Activated naive CD4-positive, alpha-beta T cell treated with anti-CD3 and anti-CD28 coated beads for 36 hours (primary cell): ENCODE measurements at regions of chr10 and their contacts with region 1.

Region 1: DNA sequence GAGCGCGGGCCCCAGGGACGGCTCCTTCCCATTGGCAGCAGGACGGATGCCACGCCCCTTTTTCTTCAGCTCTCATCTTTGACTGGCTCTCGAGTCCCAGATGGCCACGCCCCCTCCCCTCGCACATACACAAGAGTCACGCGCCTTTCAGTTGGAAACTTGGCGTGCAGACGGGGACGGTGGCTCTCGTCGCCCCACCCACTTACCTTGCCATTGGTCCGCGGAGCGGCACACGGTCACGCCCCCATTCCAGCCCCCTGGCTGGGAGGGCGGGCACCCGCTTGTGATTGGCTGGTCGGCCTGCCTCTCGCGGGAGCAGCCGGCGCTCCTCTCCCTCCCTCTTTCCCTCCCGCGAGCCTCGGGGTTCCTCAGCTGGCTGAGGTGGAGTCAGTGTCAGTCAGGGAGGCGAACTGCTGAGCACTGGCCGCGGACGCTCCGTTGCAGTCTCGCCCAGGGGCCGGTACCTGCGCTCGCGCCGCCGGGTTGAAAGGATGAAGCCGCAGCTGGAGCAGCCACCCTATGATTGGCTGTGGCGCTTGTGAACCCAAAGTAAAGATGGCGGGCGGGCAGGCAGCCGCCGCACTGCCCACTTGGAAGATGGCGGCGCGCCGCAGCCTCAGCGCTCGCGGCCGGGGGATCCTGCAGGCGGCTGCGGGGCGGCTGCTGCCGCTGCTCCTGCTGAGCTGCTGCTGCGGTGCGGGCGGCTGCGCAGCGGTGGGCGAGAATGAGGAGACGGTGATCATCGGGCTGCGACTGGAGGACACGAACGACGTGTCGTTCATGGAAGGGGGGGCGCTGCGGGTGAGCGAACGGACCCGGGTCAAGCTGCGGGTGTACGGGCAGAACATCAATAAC is at the start of gene CNNM2:
- DNase-seq: peak; percentile 100
- H3K4me3 Mint-ChIP-seq: peak within 1 kb of the TSS; percentile 92
- H3K27ac Mint-ChIP-seq: peak within 1 kb of the TSS; percentile 88
- H3K4me1 Mint-ChIP-seq: peaks cover 49% of the 10 kb centered on the region
- H3K27me3 Mint-ChIP-seq: peaks cover 5% of the 10 kb centered on the region
- total RNA-seq, gene CNNM2: 3.9 to 4.3 TPM

Region 2: DNA sequence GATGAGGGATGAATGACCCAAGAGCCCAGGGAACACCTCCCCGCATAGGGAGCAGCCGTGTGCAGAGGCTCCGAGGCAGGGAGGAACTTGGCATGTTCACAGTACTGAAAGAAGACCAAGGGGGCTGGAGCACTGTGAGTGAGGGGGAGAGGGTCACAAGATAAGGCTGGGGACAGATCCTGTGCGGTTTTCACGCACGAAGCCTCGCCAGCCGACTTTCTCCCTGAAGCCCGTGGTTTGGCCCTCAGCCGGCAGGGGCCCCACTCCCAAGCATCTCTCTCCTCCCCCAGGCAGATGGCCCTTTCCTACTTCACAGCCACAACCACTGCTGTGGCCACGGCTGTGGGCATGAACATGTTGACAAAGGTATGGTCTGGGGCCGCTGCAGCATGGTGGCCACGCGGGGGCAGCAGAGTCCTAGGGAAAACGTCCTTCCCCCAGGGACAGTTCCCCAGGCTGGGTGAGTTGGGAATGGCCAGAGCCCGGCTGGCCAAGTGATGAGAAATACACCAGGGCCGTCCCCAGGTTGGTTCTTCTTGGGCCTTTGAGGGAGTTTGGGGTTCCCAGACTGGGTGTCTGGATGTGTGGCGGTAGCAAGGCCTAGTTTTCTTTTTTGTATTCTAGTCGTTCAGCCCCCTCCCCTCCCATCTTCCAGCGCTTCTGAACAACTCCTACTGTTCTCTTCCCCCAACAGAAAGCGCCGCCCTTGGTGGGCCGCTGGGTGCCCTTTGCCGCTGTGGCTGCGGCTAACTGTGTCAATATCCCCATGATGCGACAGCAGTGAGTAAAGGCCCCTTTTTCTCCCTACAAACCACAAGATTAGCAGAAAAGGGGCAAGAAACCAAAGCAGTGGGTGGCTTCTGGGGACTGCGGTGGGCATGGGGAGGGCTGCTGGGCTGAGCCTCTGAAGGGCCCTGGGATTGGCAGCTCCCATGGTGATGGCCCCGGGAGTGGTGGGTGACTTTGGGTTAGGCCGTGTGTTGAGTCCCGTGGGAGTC is 188.9 kb before region 1 on chr10:
- CTCF ChIA-PET with region 1: no interaction called
- intact Hi-C with region 1: loop called (anchors 5 kb)
- DNase-seq: peak; percentile 71
- H3K4me3 Mint-ChIP-seq: no peak overlapping the region
- H3K27ac Mint-ChIP-seq: no peak overlapping the region
- H3K4me1 Mint-ChIP-seq: no peaks in the 10 kb centered on the region
- H3K27me3 Mint-ChIP-seq: no peaks in the 10 kb centered on the region

Region 3: DNA sequence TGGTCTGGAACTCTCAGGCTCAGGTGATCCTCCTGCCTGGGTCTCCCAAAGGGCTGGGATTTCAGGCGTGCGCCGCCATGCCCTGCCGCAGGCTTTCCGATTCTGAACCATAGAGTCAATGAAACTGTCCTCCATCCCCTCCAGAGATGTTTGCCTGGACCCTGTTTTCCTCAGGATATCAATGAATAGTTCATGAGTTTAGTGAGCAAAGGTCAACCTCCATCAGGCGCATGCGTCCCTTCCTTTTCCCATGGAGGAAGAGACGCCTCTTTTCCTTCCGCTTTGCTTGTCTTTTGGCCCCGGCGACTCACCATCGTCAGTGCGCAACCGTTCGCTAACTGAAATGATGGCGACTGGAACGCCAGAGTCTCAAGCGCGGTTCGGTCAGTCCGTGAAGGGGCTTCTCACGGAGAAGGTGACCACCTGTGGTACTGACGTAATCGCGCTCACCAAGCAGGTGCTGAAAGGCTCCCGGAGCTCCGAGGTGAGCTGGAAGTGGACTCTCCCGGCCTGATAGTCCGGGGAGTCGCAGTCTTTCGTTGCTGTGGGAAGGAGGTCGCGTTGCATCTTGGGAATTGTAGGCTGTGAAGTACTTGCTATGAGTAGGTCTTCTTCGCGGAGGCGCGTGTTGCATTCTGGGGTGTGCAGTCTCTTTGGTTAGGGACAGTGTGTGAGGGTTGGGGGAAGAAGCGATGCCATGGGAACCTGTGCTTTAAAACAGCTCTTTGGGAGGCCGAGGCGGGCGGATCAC is 64.1 kb before region 1 on chr10 and contains the start of gene BORCS7:
- CTCF ChIA-PET with region 1: interaction called, 5 read pairs
- intact Hi-C with region 1: loop called (anchors 1 kb)
- DNase-seq: peak; percentile 95
- H3K4me3 Mint-ChIP-seq: peak within 1 kb of the TSS; percentile 95
- H3K27ac Mint-ChIP-seq: peak within 1 kb of the TSS; percentile 97
- H3K4me1 Mint-ChIP-seq: peaks cover 17% of the 10 kb centered on the region
- H3K27me3 Mint-ChIP-seq: no peaks in the 10 kb centered on the region
- total RNA-seq, gene BORCS7: 5.6 to 5.8 TPM

Region 4: DNA sequence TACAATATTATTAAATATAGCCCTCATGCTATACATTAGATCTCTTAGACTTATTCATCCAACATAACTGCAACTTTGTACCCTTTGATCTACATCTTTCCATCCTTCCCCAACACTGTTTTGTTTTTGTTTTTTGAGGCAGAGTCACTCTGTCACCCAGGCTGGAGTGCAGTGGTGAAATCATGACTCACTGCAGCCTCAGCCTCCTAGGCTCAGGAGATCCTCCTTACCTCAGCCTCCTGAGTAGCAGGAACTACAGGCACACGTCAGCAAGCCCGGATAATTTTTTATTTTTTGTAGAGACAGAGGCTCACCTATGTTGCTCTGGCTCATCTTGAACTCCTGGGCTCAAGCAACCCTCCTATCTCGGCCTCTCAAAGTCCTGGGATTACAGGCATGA is 221.6 kb after region 1 on chr10:
- CTCF ChIA-PET with region 1: no interaction called
- intact Hi-C with region 1: loop called (anchors 1 kb)
- DNase-seq: peak; percentile 10
- H3K4me3 Mint-ChIP-seq: no peak overlapping the region
- H3K27ac Mint-ChIP-seq: no peak overlapping the region
- H3K4me1 Mint-ChIP-seq: peaks cover 23% of the 10 kb centered on the region
- H3K27me3 Mint-ChIP-seq: no peaks in the 10 kb centered on the region

Region 5: GRCh38 chr10:103333925-103334520 is 415.8 kb after region 1 on chr10:
- CTCF ChIA-PET with region 1: no interaction called
- intact Hi-C with region 1: loop called (anchors 1 kb)
- DNase-seq: no peak
- H3K4me3 Mint-ChIP-seq: no peak overlapping the region
- H3K27ac Mint-ChIP-seq: no peak overlapping the region
- H3K4me1 Mint-ChIP-seq: no peaks in the 10 kb centered on the region
- H3K27me3 Mint-ChIP-seq: no peaks in the 10 kb centered on the region

Region 6: DNA sequence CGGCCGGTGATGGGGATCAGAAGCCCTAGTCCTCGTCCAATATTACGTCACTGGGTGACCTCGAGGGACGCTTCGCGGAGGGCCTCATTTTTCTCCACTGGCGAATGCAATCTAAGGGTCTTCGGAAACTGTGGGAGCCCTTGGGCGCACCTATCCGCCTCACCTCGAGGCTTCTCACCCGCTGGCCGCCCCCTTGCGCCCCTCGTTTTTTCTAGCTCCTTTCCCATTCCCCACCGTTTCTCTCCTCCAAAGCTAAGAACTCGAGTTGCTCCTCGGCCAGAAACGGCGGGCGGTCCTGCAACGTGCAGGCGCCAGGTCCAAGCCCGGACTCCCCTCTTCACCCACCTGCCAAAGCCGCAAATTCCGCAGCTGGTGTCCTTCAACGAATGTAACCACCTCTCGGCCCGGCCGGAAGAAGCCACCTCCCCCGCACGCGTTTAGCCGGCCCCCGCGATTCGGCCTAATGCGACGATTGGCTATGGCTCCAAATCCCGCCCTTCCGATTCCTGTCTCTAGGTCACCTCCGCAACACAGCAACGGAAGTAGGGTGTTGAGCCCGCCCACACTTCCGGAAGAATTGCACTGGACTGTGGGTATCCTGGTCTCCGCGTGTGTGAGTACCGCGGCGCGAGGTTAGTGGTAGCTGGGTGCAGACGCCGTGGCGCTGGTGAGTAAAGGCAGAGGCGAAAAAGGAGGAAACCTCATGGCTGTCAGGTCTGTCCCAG is 478.0 kb after region 1 on chr10 and contains the starts of genes ATP5MK and PDCD11:
- CTCF ChIA-PET with region 1: interaction called, 3 read pairs
- intact Hi-C with region 1: loop called (anchors 1 kb)
- DNase-seq: peak; percentile 99
- H3K4me3 Mint-ChIP-seq: peak within 1 kb of the TSS; percentile 97
- H3K27ac Mint-ChIP-seq: peak within 1 kb of the TSS; percentile 85
- H3K4me1 Mint-ChIP-seq: peaks cover 69% of the 10 kb centered on the region
- H3K27me3 Mint-ChIP-seq: no peaks in the 10 kb centered on the region
- total RNA-seq, gene ATP5MK: 422 to 423 TPM
- total RNA-seq, gene PDCD11: 50.1 TPM